Activated CD4-positive, alpha-beta T cell treated with anti-CD3 and anti-CD28 coated beads for 36 hours (primary cell): ENCODE measurements at regions of chrX and their contacts with region 1.

Region 1: GRCh38 chrX:39772057-39772832 is 325.5 kb downstream of the BCOR start:
- DNase-seq: peak; percentile 84
- ATAC-seq: peak; percentile 71
- H3K4me3 Mint-ChIP-seq: peak overlapping the region; percentile 39
- H3K27ac Mint-ChIP-seq: peak overlapping the region; percentile 94
- H3K4me1 Mint-ChIP-seq: peaks cover 42% of the 10 kb centered on the region
- H3K27me3 Mint-ChIP-seq: no peaks in the 10 kb centered on the region

Region 2: DNA sequence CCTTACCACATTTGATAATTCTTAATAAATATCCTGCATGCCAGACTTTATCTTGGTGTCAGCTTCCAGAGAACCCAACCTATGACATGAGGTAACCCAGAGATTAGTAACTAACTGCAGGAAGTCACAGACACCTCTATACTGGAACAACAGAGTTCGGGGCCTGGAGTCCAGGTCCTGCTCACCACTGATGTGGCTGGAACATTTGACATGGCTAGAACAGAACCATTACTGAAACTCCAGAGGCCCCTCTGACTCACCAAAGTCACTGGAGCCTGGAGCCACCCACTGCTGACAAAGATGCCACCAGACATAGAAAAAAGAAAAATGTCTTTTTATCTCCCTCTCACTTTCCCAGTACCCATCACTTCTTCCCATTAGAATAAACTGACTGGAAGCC is 567.3 kb before region 1 on chrX:
- CTCF ChIA-PET with region 1: no interaction called
- POLR2A ChIA-PET with region 1: no interaction called
- intact Hi-C with region 1: loop called in 1 of 2 experiments (anchors 5 kb)
- DNase-seq: peak; percentile 75
- ATAC-seq: peak; percentile 90
- H3K4me3 Mint-ChIP-seq: peak overlapping the region; percentile 21
- H3K27ac Mint-ChIP-seq: peak overlapping the region; percentile 83
- H3K4me1 Mint-ChIP-seq: peaks cover 55% of the 10 kb centered on the region
- H3K27me3 Mint-ChIP-seq: no peaks in the 10 kb centered on the region

Region 3: GRCh38 chrX:39336671-39337311 is 435.5 kb before region 1 on chrX:
- CTCF ChIA-PET with region 1: no interaction called
- POLR2A ChIA-PET with region 1: no interaction called
- intact Hi-C with region 1: loop called in 1 of 2 experiments (anchors 10 kb)
- DNase-seq: peak; percentile 56
- ATAC-seq: peak; percentile 91
- H3K4me3 Mint-ChIP-seq: no peak overlapping the region
- H3K27ac Mint-ChIP-seq: peak overlapping the region; percentile 89
- H3K4me1 Mint-ChIP-seq: peaks cover 38% of the 10 kb centered on the region
- H3K27me3 Mint-ChIP-seq: no peaks in the 10 kb centered on the region

Region 4: DNA sequence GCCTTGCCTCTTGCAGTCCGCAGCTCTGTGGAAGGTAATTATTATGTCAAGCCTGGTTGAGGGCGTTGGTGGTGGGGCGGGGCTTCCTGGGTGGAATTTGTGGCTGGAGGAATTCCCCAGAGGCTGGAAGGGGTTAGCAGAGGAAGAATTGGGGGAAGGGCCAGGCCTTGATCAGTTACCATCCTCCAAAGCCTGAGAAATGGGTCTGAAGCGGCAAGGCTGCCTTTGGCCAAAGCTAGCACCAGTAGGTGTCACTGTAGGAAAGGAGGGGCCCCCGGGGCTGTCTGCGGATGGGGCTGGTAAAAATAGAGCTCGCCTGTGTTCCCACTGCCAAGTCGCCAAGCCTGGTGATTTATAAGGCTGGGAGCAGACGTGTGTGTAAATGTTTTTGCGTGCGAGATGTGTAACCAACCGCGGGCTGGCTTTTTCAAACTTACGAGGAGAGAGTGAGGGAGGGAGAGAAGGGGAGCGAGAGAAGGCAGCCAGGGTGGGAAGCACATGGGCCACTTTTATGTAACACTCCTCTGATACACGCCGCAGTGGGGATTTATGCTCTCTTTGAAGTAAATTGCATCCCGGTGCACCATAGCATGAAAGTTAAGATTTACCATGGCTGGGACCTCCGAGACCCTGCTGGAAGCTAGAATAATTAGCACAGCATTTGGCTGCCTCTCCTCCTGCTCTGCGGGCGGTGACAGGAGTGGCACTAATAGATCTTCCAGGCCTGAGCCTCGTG is 41.4 kb before region 1 on chrX:
- CTCF ChIA-PET with region 1: interaction called, 3 read pairs
- POLR2A ChIA-PET with region 1: no interaction called
- intact Hi-C with region 1: loop called (anchors 2 to 5 kb)
- DNase-seq: peak; percentile 76
- ATAC-seq: peak; percentile 92
- H3K4me3 Mint-ChIP-seq: peak overlapping the region; percentile 5
- H3K27ac Mint-ChIP-seq: peak overlapping the region; percentile 71
- H3K4me1 Mint-ChIP-seq: peaks cover 17% of the 10 kb centered on the region
- H3K27me3 Mint-ChIP-seq: no peaks in the 10 kb centered on the region

Region 5: DNA sequence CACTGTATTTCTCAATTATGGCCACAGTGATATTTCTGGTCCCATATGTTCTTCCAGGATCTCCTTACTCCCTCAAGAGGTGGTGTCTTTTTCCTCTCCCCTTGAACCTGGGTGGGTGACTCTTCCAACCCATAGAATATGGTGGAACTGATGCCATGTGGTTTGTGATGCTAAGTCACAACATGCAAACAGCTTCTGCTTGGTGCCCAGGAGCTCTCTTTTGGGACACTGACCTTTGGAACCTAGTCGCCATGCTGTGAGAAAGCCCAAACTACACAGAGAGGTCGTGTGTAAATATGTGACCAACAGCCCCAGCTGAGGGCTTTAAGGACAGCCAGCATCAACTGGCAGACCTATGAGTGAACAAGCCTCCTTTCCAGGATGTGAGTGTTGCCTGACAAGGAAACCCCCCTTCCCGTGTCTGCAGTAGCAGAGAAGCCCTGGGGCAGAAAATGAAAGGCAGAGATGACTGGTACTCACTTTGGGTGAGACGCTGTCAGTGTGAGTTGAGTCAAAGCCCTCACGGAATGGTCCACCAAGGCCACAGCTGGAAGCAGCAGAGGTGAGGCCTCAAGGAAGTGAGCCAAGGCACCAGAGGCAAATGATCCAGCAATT is 102.1 kb after region 1 on chrX:
- CTCF ChIA-PET with region 1: no interaction called
- POLR2A ChIA-PET with region 1: no interaction called
- intact Hi-C with region 1: loop called in 1 of 2 experiments (anchors 5 kb)
- DNase-seq: peak; percentile 84
- ATAC-seq: peak; percentile 80
- H3K4me3 Mint-ChIP-seq: no peak overlapping the region
- H3K27ac Mint-ChIP-seq: peak overlapping the region; percentile 95
- H3K4me1 Mint-ChIP-seq: peaks cover 53% of the 10 kb centered on the region
- H3K27me3 Mint-ChIP-seq: no peaks in the 10 kb centered on the region

Region 6: GRCh38 chrX:40090050-40090804 is 318.0 kb after region 1 on chrX:
- CTCF ChIA-PET with region 1: no interaction called
- POLR2A ChIA-PET with region 1: no interaction called
- intact Hi-C with region 1: no loop called
- DNase-seq: no peak
- ATAC-seq: peak; percentile 25
- H3K4me3 Mint-ChIP-seq: peak overlapping the region; percentile 61
- H3K27ac Mint-ChIP-seq: no peak overlapping the region
- H3K4me1 Mint-ChIP-seq: peaks cover 61% of the 10 kb centered on the region
- H3K27me3 Mint-ChIP-seq: no peaks in the 10 kb centered on the region

Region 7: GRCh38 chrX:40169193-40170101 is 397.2 kb after region 1 on chrX:
- CTCF ChIA-PET with region 1: no interaction called
- POLR2A ChIA-PET with region 1: no interaction called
- intact Hi-C with region 1: loop called (anchors 1 to 5 kb)
- DNase-seq: peak; percentile 89
- ATAC-seq: peak; percentile 67
- H3K4me3 Mint-ChIP-seq: peak overlapping the region; percentile 80
- H3K27ac Mint-ChIP-seq: peak overlapping the region; percentile 90
- H3K4me1 Mint-ChIP-seq: peaks cover 37% of the 10 kb centered on the region
- H3K27me3 Mint-ChIP-seq: no peaks in the 10 kb centered on the region

Region 8: DNA sequence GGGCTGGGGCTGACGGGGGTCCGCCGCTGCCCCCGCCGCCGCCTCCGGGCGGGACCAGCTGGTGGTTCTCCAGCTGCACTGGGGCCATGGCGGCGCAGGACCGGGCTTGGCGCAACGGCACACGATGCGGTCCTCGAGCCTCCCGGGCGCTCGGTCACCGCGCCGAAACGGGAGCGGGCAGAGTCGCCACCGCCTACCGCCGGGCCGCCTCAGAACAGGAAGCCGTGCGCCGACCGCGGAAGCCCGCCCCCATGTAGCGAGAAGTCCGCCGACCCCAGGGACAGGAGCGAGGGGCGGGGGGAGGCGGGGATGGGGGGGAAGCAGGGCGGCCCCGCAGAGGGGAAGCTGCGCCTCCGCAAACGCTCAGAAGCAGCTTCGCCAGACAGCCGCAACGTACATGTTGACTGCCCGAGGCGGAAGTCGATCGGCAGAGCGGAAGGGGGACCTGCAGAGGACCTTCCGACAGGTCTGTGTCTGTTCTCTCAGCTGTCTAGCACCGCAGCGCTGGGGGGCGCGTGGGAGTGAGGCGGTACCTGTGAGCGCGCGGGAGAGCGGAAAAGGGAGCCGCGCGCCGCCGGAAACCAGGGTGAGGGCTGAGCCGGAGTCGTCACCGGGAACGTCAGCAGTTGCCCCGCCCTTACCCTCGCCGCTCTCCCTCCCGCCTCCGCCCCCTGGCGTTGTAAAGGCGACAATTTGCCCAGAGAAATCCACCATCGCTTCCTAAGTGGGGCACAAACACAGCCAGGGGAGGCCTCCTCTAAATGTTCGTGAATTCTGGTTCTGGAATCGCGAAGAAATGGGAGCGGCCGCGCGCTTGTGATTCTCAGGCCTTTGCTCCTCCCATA is 963.3 kb after region 1 on chrX and contains the start of gene MED14:
- CTCF ChIA-PET with region 1: no interaction called
- POLR2A ChIA-PET with region 1: no interaction called
- intact Hi-C with region 1: loop called in 1 of 2 experiments (anchors 5 kb)
- DNase-seq: peak; percentile 95
- ATAC-seq: peak; percentile 93
- H3K4me3 Mint-ChIP-seq: peak within 1 kb of the TSS; percentile 84
- H3K27ac Mint-ChIP-seq: peak within 1 kb of the TSS; percentile 96
- H3K4me1 Mint-ChIP-seq: peaks cover 43% of the 10 kb centered on the region
- H3K27me3 Mint-ChIP-seq: no peaks in the 10 kb centered on the region
- total RNA-seq, gene MED14: 51.0 to 60.1 TPM